ENCODE measurements at regions of chr12 and their contacts with region 1.

Region 1: GRCh38 chr12:121673003-121673511 is 3.6 kb upstream of the MORN3 start:
- DNase-seq: peak; percentile 40 to 54
- ATAC-seq: peak; percentile 60

Region 2: GRCh38 chr12:121499929-121500793 is 172.9 kb before region 1 on chr12:
- intact Hi-C with region 1: loop called in 1 of 2 experiments (anchors 10 kb)
- DNase-seq: peak; percentile 38 to 81
- ATAC-seq: peak; percentile 86